Natural killer cell (primary cell): ENCODE measurements at regions of chr11 and their contacts with region 1.

Region 1: GRCh38 chr11:61516675-61517572 is 8.4 kb downstream of the LRRC10B start:
- DNase-seq: peak; percentile 57 to 76
- ATAC-seq: peak; percentile 69 to 87 (median 75)
- H3K4me3 ChIP-seq: no peak overlapping the region
- H3K4me3 Mint-ChIP-seq: peak overlapping the region; percentile 25
- H3K27ac ChIP-seq: no peak overlapping the region
- H3K27ac Mint-ChIP-seq: no peak overlapping the region
- H3K4me1 ChIP-seq: peaks cover 11% of the 10 kb centered on the region
- H3K4me1 Mint-ChIP-seq: peaks cover 8 to 12% of the 10 kb centered on the region in 2 donors
- H3K27me3 ChIP-seq: no peaks in the 10 kb centered on the region
- H3K27me3 Mint-ChIP-seq: peaks cover 9 to 18% of the 10 kb centered on the region in 2 donors
- CTCF ChIP-seq: peak; percentile 89

Region 2: DNA sequence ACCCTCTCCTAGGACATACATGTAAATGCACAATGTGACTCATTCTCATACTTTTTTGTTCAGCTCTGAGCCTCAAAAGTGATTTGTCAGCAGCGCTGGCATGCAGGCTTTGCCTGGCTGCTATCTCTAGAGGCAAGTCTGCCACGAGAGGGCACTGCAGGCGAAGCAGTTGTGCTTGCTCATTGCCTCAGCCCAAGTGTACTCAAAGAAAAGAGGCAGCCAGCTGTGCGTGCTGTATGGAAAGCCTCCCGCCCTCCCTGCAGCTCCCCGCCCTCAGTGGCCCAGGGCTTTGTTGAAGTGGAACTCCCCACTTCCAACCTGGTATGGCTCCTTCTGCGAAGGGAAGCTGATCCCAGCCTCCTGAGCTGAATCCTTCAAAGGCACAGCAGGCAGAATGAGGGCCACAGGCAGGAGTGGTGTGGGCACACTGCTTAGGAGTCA is 70.7 kb before region 1 on chr11:
- intact Hi-C with region 1: loop called (anchors 2 kb)
- DNase-seq: peak; percentile 38 to 77
- ATAC-seq: peak; percentile 69 to 87 (median 76)
- H3K4me3 ChIP-seq: no peak overlapping the region
- H3K4me3 Mint-ChIP-seq: no peak overlapping the region
- H3K27ac ChIP-seq: no peak overlapping the region
- H3K27ac Mint-ChIP-seq: no peak overlapping the region
- H3K4me1 ChIP-seq: no peaks in the 10 kb centered on the region
- H3K4me1 Mint-ChIP-seq: peaks cover 22% of the 10 kb centered on the region in 2 donors
- H3K27me3 ChIP-seq: no peaks in the 10 kb centered on the region
- H3K27me3 Mint-ChIP-seq: no peaks in the 10 kb centered on the region
- CTCF ChIP-seq: peak; percentile 13

Region 3: GRCh38 chr11:61477727-61478148 is 39.2 kb before region 1 on chr11:
- intact Hi-C with region 1: loop called (anchors 1 kb)
- DNase-seq: peak; percentile 52 to 72
- ATAC-seq: peak; percentile 41 to 73 (median 72)
- H3K4me3 ChIP-seq: no peak overlapping the region
- H3K4me3 Mint-ChIP-seq: no peak overlapping the region
- H3K27ac ChIP-seq: no peak overlapping the region
- H3K27ac Mint-ChIP-seq: no peak overlapping the region
- H3K4me1 ChIP-seq: peaks cover 8% of the 10 kb centered on the region
- H3K4me1 Mint-ChIP-seq: peaks cover 0 to 6% of the 10 kb centered on the region in 2 donors
- H3K27me3 ChIP-seq: no peaks in the 10 kb centered on the region
- H3K27me3 Mint-ChIP-seq: peaks cover 0 to 3% of the 10 kb centered on the region in 2 donors
- CTCF ChIP-seq: peak; percentile 94